ENCODE measurements at regions of chr19 and their contacts with region 1.

Region 1: DNA sequence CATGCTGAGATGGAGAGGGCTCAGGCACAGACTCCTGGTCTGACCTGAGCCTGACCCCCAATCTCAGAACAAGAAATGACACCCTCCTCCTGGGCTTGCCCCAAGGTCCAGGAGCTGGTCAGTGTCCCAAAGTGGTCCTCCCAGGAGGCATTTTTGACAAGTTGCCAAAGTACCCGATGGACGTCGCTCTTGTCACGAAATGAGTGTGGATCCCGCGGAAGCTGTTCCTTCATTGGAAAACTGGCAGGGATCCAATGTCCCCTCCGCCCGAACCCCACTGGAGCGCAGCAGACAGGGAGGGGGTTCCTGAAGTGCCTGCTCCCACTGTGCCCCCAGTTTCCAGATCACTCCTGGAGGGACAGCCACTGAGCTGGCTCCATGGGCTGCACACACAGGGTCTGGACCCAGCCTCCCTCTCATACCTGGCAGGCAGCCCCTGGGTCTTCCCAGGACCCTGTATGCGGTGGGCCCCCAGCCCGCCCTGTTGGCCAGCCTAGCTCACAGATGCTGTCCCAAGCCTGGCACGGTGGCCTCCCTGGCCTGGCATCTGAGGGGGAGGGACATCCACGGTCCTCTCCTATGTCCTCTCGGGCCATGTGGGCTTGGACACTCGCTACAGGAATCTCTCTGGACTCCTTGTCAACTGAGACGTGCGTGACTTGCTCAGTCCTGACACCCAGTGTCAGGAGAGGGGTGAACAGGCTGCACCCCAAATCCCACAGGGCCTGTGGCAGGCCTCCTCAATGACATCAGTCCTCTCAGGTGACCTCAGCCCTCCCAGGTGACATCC is 12.8 kb upstream of the ZNF14 start:
- DNase-seq: peak in 2 of 4 experiments; percentile 11 to 18
- ATAC-seq: peak; percentile 13; the same call in 2 of the 3 replicates
- H3K4me3 ChIP-seq: no peak overlapping the region
- H3K27ac ChIP-seq: no peak overlapping the region
- H3K4me1 ChIP-seq: peaks cover 0 to 9% of the 10 kb centered on the region in 2 experiments; a peak in 2 of 5 replicates
- H3K27me3 ChIP-seq: peaks cover 14 to 76% of the 10 kb centered on the region in 2 experiments; a peak in 4 of 5 replicates
- CTCF ChIP-seq: no peak
- EP300 ChIP-seq: no peak
- POLR2A ChIP-seq: no peak
- RAD21 ChIP-seq: no peak

Region 2: DNA sequence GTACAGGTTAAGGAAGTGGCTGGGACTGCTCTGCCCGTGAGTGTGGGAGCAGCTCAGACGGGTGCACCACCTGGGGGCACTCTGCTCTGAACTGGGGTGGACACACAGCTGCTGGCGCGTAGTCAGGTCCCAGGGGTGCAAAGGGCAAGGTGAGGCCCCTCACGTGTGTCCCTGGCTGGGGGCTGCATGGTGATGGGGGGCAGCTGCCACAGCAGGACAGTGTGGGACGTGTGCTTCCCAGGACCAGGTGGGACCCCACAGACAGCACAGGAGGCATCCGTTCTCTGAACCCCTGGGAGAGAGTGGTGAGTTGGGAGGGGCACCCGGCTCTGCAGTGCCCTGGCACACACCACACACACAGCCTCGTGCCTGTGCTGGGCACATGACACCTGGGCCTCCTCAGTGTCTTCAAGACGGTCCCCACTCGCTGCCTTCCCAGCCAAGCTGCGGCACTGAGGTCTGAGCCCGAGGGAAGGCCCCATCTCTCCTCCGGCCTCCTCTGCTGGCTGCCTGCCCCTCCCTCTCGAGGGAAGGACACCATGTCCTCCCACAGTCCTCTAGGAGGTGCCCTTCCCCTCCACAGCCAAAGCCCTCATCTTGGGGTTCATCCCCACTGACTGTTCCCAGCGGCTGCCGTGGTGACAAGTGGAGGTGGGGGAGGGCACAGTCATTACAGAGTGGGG is 182.9 kb before region 1 on chr19:
- CTCF ChIA-PET with region 1: no interaction called
- POLR2A ChIA-PET with region 1: no interaction called
- in situ Hi-C with region 1: no loop called
- intact Hi-C with region 1: loop called (anchors 10 kb)
- DNase-seq: peak in 3 of 4 experiments; percentile 38 to 55 (median 53)
- ATAC-seq: peak; percentile 89
- H3K4me3 ChIP-seq: no peak overlapping the region
- H3K27ac ChIP-seq: no peak overlapping the region
- H3K4me1 ChIP-seq: peaks cover 0 to 19% of the 10 kb centered on the region in 2 experiments; a peak in 2 of 5 replicates
- H3K27me3 ChIP-seq: peaks cover 0 to 21% of the 10 kb centered on the region in 2 experiments; a peak in 3 of 5 replicates
- CTCF ChIP-seq: peak; percentile 56 to 68 (median 57)
- EP300 ChIP-seq: no peak
- POLR2A ChIP-seq: no peak
- RAD21 ChIP-seq: peak in 1 of 2 experiments; percentile 58; a peak in 3 of 4 replicates

Region 3: GRCh38 chr19:19821366-19821951 is 75.8 kb after region 1 on chr19 and contains the start of gene ZNF506:
- CTCF ChIA-PET with region 1: no interaction called
- POLR2A ChIA-PET with region 1: no interaction called
- in situ Hi-C with region 1: no loop called
- intact Hi-C with region 1: no loop called
- DNase-seq: peak in 2 of 4 experiments; percentile 6 to 13
- ATAC-seq: no peak
- H3K4me3 ChIP-seq: no peak within 1 kb of the TSS
- H3K27ac ChIP-seq: no peak within 1 kb of the TSS
- H3K4me1 ChIP-seq: no peaks in the 10 kb centered on the region; a peak in 1 of 5 replicates
- H3K27me3 ChIP-seq: no peaks in the 10 kb centered on the region
- CTCF ChIP-seq: no peak
- EP300 ChIP-seq: no peak
- POLR2A ChIP-seq: no peak
- RAD21 ChIP-seq: no peak
- polyA plus RNA-seq, gene ZNF506: 0.14 to 0.44 TPM

Measured in K562 (cell line).